PC-3 (cell line): ENCODE measurements at regions of chr15 and their contacts with region 1.

Region 1: DNA sequence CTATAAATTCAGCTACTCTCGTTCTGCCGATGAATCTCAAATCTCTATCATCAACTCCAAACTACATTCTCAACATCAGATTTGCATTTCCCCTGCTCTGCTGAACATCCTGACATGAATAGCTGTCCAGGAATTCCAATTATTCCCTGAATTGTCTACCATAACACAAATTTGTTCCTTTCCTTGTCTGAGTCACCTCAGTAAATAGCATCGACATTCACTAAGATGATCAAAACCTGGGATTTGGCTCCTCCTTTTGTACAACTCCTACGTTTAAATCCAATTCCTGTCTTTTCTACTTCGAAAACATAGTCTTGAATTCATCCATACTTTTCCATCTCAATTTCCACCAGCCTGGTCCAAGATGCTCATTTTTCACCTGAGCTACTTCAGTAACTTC is 107.0 kb downstream of the GREM1 start:
- DNase-seq: peak; percentile 97
- ATAC-seq: peak; percentile 74
- H3K4me3 ChIP-seq: peak overlapping the region; percentile 24; the same call in 1 of the 2 replicates
- H3K27ac ChIP-seq: peak overlapping the region; percentile 95
- H3K4me1 ChIP-seq: peaks cover 71% of the 10 kb centered on the region
- H3K27me3 ChIP-seq: no peaks in the 10 kb centered on the region
- CTCF ChIP-seq: peak; percentile 44; the same call in 1 of the 2 replicates

Region 2: GRCh38 chr15:32730677-32731654 is 93.8 kb before region 1 on chr15:
- CTCF ChIA-PET with region 1: no interaction called
- POLR2A ChIA-PET with region 1: no interaction called
- intact Hi-C with region 1: loop called (anchors 5 kb)
- DNase-seq: peak; percentile 57
- ATAC-seq: no peak
- H3K4me3 ChIP-seq: no peak overlapping the region
- H3K27ac ChIP-seq: no peak overlapping the region
- H3K4me1 ChIP-seq: peaks cover 12% of the 10 kb centered on the region; the same call in 1 of the 2 replicates
- H3K27me3 ChIP-seq: no peaks in the 10 kb centered on the region
- CTCF ChIP-seq: no peak

Region 3: GRCh38 chr15:32736005-32736700 is 88.6 kb before region 1 on chr15:
- CTCF ChIA-PET with region 1: no interaction called
- POLR2A ChIA-PET with region 1: interaction called, 18 read pairs
- intact Hi-C with region 1: loop called (anchors 5 kb)
- DNase-seq: no peak
- ATAC-seq: no peak; the same call in 1 of the 2 replicates
- H3K4me3 ChIP-seq: no peak overlapping the region
- H3K27ac ChIP-seq: no peak overlapping the region
- H3K4me1 ChIP-seq: peaks cover 12% of the 10 kb centered on the region; the same call in 1 of the 2 replicates
- H3K27me3 ChIP-seq: no peaks in the 10 kb centered on the region
- CTCF ChIP-seq: no peak

Region 4: GRCh38 chr15:32774022-32774421 is 50.8 kb before region 1 on chr15:
- CTCF ChIA-PET with region 1: no interaction called
- POLR2A ChIA-PET with region 1: interaction called, 9 read pairs
- intact Hi-C with region 1: loop called (anchors 1 kb)
- DNase-seq: peak; percentile 98
- ATAC-seq: peak; percentile 98
- H3K4me3 ChIP-seq: no peak overlapping the region
- H3K27ac ChIP-seq: peak overlapping the region; percentile 96
- H3K4me1 ChIP-seq: peaks cover 33% of the 10 kb centered on the region
- H3K27me3 ChIP-seq: no peaks in the 10 kb centered on the region
- CTCF ChIP-seq: no peak

Region 5: GRCh38 chr15:32802286-32802936 is 22.4 kb before region 1 on chr15:
- CTCF ChIA-PET with region 1: no interaction called
- POLR2A ChIA-PET with region 1: no interaction called
- intact Hi-C with region 1: loop called (anchors 1 kb)
- DNase-seq: peak; percentile 95
- ATAC-seq: peak; percentile 82
- H3K4me3 ChIP-seq: no peak overlapping the region
- H3K27ac ChIP-seq: peak overlapping the region; percentile 92
- H3K4me1 ChIP-seq: peaks cover 21% of the 10 kb centered on the region
- H3K27me3 ChIP-seq: no peaks in the 10 kb centered on the region
- CTCF ChIP-seq: no peak

Region 6: GRCh38 chr15:32956006-32956405 is 131.2 kb after region 1 on chr15:
- CTCF ChIA-PET with region 1: no interaction called
- POLR2A ChIA-PET with region 1: no interaction called
- intact Hi-C with region 1: loop called (anchors 1 kb)
- DNase-seq: peak; percentile 75
- ATAC-seq: peak; percentile 86
- H3K4me3 ChIP-seq: no peak overlapping the region
- H3K27ac ChIP-seq: 0 out of 2 replicates have a peak overlapping the region, but pooled peaks have one; percentile 1
- H3K4me1 ChIP-seq: peaks cover 17% of the 10 kb centered on the region
- H3K27me3 ChIP-seq: no peaks in the 10 kb centered on the region
- CTCF ChIP-seq: peak; percentile 89

Region 7: GRCh38 chr15:32979710-32980109 is 154.9 kb after region 1 on chr15:
- CTCF ChIA-PET with region 1: no interaction called
- POLR2A ChIA-PET with region 1: no interaction called
- intact Hi-C with region 1: loop called (anchors 5 kb)
- DNase-seq: peak; percentile 92
- ATAC-seq: peak; percentile 93
- H3K4me3 ChIP-seq: no peak overlapping the region
- H3K27ac ChIP-seq: peak overlapping the region; percentile 92
- H3K4me1 ChIP-seq: peaks cover 26% of the 10 kb centered on the region
- H3K27me3 ChIP-seq: no peaks in the 10 kb centered on the region
- CTCF ChIP-seq: no peak

Region 8: DNA sequence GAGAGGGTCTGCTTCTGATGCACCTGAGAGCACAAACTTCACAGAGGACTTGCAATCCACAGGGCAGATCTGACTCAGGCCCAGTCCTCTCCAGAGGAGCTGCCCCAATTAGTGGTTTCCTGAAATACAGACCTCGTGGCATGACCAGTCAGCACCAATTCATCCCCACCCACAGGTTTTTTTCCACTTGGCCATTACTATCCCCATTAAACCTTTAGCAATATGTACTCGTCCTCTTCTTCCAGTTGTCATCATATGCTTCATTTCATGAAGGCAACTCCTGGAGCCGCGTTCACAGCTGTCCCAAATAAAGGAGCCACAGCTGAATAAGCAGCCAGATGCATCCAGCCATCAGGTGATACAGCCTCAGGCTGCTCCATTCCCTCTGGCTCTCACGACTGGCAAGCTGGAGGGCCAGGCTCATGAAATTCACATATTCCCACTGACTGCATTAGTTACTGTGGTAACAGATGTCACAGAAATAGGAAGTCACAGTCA is 206.6 kb after region 1 on chr15:
- CTCF ChIA-PET with region 1: no interaction called
- POLR2A ChIA-PET with region 1: no interaction called
- intact Hi-C with region 1: no loop called
- DNase-seq: peak; percentile 50
- ATAC-seq: peak; percentile 77
- H3K4me3 ChIP-seq: no peak overlapping the region
- H3K27ac ChIP-seq: peak overlapping the region; percentile 26
- H3K4me1 ChIP-seq: peaks cover 32% of the 10 kb centered on the region
- H3K27me3 ChIP-seq: no peaks in the 10 kb centered on the region
- CTCF ChIP-seq: no peak